ENCODE measurements at regions of chr3 and their contacts with region 1.

Region 1: DNA sequence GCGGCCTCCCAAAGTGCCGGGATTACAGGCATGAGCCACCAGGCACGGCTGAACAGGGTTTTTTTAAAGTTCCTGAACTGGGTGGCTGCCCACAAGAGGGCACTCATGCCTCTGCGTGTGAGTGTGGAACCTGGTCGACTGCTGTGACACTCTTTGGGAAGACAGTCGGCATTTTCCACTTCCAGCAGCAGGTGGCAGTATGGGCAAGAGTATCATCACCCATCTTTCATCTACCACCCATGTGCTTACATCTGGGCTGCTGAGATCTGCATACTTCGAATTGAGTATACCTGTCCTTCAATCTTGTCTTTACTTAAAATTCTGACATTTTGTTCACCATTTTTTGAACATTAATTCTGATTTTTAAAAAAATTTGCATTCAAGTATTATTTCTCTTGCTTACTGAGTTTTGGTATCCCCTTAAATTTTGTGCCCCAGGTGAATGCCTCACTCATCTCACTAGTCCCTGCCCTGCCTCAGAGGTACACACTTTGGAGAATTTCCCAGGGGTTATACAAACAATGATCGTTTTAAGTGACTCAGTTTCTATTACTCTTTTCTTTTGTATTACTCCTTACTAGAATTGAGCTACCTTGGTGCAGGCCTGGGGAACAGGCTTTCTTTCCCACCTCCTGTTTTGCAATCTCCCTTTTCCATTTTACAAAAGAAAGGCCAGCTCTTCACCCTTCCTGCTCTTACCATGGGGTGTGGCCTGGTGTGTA is 11.8 kb downstream of the CLEC3B start:
- ATAC-seq: peak; percentile 53 to 94 (median 76)
- H3K4me3 ChIP-seq: no peak overlapping the region
- H3K27ac ChIP-seq: no peak overlapping the region
- H3K4me1 ChIP-seq: peaks cover 5 to 6% of the 10 kb centered on the region in 2 donors

Region 2: GRCh38 chr3:45199837-45200648 is 162.1 kb after region 1 on chr3:
- in situ Hi-C with region 1: loop called in 4 of 9 experiments (anchors 10 to 25 kb)
- ATAC-seq: peak in 6 of 8 experiments; percentile 26 to 99 (median 60)
- H3K4me3 ChIP-seq: no peak overlapping the region
- H3K27ac ChIP-seq: no peak overlapping the region
- H3K4me1 ChIP-seq: no peaks in the 10 kb centered on the region

Region 3: DNA sequence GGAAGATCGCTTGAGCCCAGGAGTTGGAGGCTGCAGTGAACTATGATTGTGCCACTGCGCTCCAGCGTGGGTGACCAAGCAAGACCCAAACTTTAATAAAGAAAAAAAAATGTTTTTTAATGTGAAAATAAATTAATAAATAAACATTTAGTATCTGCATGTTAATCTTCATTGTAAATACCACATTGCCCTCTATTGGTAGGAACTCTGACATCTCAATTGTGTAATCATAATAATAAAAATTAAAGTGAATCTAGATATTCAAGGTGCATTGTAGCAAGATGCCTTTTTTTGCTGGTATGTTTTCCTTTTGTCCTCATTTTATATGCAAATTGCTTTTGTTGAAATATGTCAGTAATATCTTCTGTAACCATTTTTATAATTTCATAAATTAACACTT is 461.6 kb after region 1 on chr3:
- in situ Hi-C with region 1: loop called in 5 of 9 experiments (anchors 10 to 25 kb)
- ATAC-seq: peak in 3 of 8 experiments; percentile 33 to 49 (median 39)
- H3K4me3 ChIP-seq: no peak overlapping the region
- H3K27ac ChIP-seq: no peak overlapping the region
- H3K4me1 ChIP-seq: peaks cover 0 to 9% of the 10 kb centered on the region in 2 donors

Region 4: GRCh38 chr3:45656575-45657363 is 618.9 kb after region 1 on chr3:
- in situ Hi-C with region 1: loop called in 3 of 9 experiments (anchors 25 kb)
- ATAC-seq: peak; percentile 50 to 98 (median 76)
- H3K4me3 ChIP-seq: no peak overlapping the region
- H3K27ac ChIP-seq: no peak overlapping the region
- H3K4me1 ChIP-seq: no peaks in the 10 kb centered on the region

Region 5: GRCh38 chr3:46078712-46079400 is 1041.0 kb after region 1 on chr3:
- in situ Hi-C with region 1: loop called in 1 of 9 experiments (anchors 25 kb)
- ATAC-seq: peak; percentile 83 to 100 (median 94)
- H3K4me3 ChIP-seq: no peak overlapping the region
- H3K27ac ChIP-seq: no peak overlapping the region
- H3K4me1 ChIP-seq: no peaks in the 10 kb centered on the region

Region 6: DNA sequence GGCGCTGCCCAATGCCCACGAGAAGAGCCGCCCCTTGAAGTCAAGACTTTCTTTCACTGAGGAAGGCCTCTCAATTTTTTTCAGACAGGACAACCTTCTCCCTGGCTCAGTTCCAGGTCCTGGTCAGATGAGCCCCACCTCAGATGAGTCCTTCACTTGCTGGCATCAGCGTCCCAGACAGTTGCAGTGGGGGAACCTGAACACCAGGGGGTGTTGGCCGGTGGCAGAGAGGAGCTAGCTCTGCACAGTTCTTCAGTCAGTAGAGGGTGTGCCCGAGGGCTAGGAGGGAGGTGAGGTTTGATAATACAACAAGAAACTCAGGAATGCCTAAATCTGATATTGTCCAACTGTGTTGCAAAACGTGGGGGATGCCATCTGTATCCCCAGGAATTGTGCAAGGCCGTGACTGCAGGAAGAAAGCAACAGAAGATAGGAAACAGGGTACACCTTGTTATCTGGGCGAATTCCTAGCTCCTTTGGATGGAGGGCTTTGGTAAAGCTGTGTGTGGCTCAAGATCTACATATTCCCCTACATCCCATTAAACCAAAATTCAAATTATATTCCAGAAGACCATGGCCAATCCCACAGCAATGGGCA is 1238.7 kb after region 1 on chr3:
- in situ Hi-C with region 1: no loop called
- ATAC-seq: peak in 3 of 8 experiments; percentile 86 to 94 (median 86)
- H3K4me3 ChIP-seq: no peak overlapping the region
- H3K27ac ChIP-seq: no peak overlapping the region
- H3K4me1 ChIP-seq: no peaks in the 10 kb centered on the region